ENCODE measurements at regions of chr17 and their contacts with region 1.

Region 1: GRCh38 chr17:38454516-38454915 is 26.3 kb downstream of the ARHGAP23 start:
- DNase-seq: no peak
- H3K4me3 ChIP-seq: peak overlapping the region; percentile 39 to 57 (median 42); a peak in 6 of 8 replicates
- H3K27ac ChIP-seq: no peak overlapping the region; the same call in 1 of the 2 replicates
- H3K4me1 ChIP-seq: peaks cover 29 to 61% (median 51%) of the 10 kb centered on the region in 4 experiments
- H3K27me3 ChIP-seq: no peaks in the 10 kb centered on the region
- CTCF ChIP-seq: no peak
- EP300 ChIP-seq: no peak
- POLR2A ChIP-seq: no peak; a peak in 1 of 3 replicates
- RAD21 ChIP-seq: no peak

Region 2: GRCh38 chr17:38317081-38317801 is 137.3 kb before region 1 on chr17:
- CTCF ChIA-PET with region 1: no interaction called
- POLR2A ChIA-PET with region 1: no interaction called
- DNase-seq: no peak
- H3K4me3 ChIP-seq: no peak overlapping the region
- H3K27ac ChIP-seq: no peak overlapping the region
- H3K4me1 ChIP-seq: no peaks in the 10 kb centered on the region
- H3K27me3 ChIP-seq: no peaks in the 10 kb centered on the region
- CTCF ChIP-seq: no peak
- EP300 ChIP-seq: no peak
- POLR2A ChIP-seq: no peak
- RAD21 ChIP-seq: no peak

Region 3: DNA sequence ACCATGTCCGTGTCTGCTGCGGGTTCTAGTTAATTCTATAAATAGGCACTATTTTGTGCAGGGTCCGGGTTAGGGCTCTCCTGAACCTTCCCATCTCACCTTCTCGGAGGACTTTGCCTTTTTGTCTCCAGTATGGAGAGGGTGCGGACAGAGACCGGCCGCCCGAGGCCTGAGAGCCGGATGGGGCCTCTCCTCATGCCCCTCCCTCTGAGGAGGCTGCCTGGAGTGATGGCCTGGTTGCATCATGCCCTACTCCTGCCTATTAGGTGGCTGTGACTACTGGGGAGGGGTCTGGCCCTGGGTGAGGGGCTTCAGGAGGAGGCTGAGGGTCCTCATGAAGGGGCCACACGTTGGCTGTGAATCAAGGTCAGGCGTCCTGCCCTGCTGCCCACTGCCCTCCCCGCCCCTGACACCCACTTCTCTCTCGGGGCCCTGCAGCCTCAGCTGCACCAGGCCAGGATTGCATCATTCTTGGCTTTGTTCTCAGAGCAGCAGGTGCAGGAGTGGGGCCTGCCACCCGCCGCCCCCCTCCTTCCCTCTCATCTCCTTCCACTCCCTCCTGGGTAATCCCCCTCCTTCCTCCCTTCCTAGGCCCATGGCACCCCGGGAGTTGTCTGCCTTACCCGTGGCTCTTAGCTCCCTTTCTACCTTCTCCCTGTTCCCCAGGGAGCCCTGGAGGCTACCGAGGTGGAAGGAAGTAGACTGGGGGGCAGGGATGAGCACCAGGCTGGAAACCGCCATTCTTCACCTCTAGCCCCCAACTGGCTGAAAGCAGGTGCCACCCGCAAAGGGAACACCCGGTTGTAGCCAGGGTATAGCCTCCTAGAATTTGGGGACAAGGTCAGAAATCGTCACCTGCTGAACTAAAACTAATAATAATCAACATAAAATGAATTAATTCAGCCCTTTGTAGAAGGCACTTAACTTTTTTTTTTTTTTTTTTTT is 39.0 kb before region 1 on chr17:
- CTCF ChIA-PET with region 1: interaction called, 167 read pairs
- POLR2A ChIA-PET with region 1: interaction called, 61 read pairs
- DNase-seq: peak in 1 of 2 experiments; percentile 86
- H3K4me3 ChIP-seq: peak overlapping the region in 3 of 4 experiments; percentile 20 to 55 (median 39); a peak in 6 of 8 replicates
- H3K27ac ChIP-seq: peak overlapping the region; percentile 94
- H3K4me1 ChIP-seq: peaks cover 4 to 44% (median 37%) of the 10 kb centered on the region in 4 experiments
- H3K27me3 ChIP-seq: peaks cover 0 to 19% (median 7%) of the 10 kb centered on the region in 4 experiments; a peak in 4 of 7 replicates
- CTCF ChIP-seq: no peak; a peak in 1 of 4 replicates
- EP300 ChIP-seq: peak in 1 of 2 experiments; percentile 57; a peak in 1 of 3 replicates
- POLR2A ChIP-seq: peak in 1 of 2 experiments; percentile 74; a peak in 2 of 3 replicates
- RAD21 ChIP-seq: no peak

Region 4: DNA sequence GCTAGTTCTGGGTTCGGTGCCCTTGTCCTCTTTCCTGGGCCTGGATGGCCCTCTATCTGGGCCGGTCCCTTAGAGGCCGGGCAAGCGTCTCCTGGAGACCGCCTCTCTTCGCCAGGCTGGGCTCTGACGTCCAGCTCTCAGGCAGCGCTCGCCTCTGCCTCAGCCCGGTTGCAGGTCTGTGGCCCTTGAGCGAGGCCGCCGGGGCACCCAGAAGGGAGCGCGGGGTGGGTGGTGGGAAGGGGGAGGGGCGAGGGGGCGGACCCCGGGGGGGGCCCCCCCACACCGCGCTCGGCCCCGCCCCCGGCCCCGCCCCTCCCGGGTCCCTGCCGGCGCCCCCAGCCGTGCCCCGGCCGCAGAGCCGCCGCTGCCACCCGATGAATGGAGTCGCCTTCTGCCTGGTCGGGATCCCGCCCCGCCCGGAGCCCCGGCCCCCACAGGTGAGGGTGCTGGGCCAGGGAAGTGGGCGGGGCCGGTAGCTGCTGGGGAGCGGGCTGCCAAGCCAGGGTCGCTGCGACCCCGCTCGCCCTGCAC is 26.3 kb before region 1 on chr17 and contains the start of gene ARHGAP23:
- CTCF ChIA-PET with region 1: interaction called, 167 read pairs
- POLR2A ChIA-PET with region 1: interaction called, 72 read pairs
- DNase-seq: peak in 1 of 2 experiments; percentile 67
- H3K4me3 ChIP-seq: peak within 1 kb of the TSS; percentile 66 to 91 (median 72)
- H3K27ac ChIP-seq: no peak within 1 kb of the TSS; the same call in 1 of the 2 replicates
- H3K4me1 ChIP-seq: peaks cover 22 to 35% (median 25%) of the 10 kb centered on the region in 4 experiments
- H3K27me3 ChIP-seq: no peaks in the 10 kb centered on the region
- CTCF ChIP-seq: no peak
- EP300 ChIP-seq: no peak
- POLR2A ChIP-seq: no peak
- RAD21 ChIP-seq: peak in 1 of 2 experiments; percentile 1; a peak in 1 of 4 replicates
- total RNA-seq, gene ARHGAP23: 107 and 108 TPM in 2 replicates

Region 5: DNA sequence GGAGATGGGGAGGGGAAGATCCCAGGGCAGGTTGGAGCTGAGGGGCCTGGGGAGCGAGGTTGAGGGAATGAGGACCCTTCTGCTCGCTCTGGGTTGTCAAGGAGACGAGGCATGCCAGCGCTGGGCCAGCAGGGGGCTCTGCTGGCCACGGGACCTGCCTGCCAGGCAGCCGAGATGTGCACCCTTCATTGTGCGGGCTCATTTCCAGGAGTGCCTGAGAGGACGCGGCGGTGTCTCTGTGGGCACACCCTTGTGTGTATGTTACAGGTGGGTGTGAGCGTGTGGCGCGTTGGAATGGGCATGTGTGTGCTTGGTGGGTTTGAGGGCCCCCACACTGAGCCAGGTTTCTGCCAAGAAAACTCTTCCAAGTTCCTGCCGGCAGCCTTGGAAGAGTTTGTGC is 10.4 kb before region 1 on chr17:
- CTCF ChIA-PET with region 1: interaction called, 51 read pairs
- POLR2A ChIA-PET with region 1: interaction called, 107 read pairs
- DNase-seq: peak in 1 of 2 experiments; percentile 80
- H3K4me3 ChIP-seq: no peak overlapping the region
- H3K27ac ChIP-seq: no peak overlapping the region
- H3K4me1 ChIP-seq: peaks cover 3 to 50% (median 31%) of the 10 kb centered on the region in 4 experiments
- H3K27me3 ChIP-seq: no peaks in the 10 kb centered on the region
- CTCF ChIP-seq: peak; percentile 90 to 95 (median 94)
- EP300 ChIP-seq: no peak
- POLR2A ChIP-seq: no peak
- RAD21 ChIP-seq: peak; percentile 88 to 90

Region 6: GRCh38 chr17:38476544-38476943 is 22.0 kb after region 1 on chr17:
- CTCF ChIA-PET with region 1: interaction called, 11 read pairs
- POLR2A ChIA-PET with region 1: interaction called, 8 read pairs
- DNase-seq: no peak
- H3K4me3 ChIP-seq: no peak overlapping the region
- H3K27ac ChIP-seq: no peak overlapping the region; the same call in 1 of the 2 replicates
- H3K4me1 ChIP-seq: no peaks in the 10 kb centered on the region
- H3K27me3 ChIP-seq: no peaks in the 10 kb centered on the region
- CTCF ChIP-seq: no peak
- EP300 ChIP-seq: no peak
- POLR2A ChIP-seq: no peak
- RAD21 ChIP-seq: no peak

Region 7: DNA sequence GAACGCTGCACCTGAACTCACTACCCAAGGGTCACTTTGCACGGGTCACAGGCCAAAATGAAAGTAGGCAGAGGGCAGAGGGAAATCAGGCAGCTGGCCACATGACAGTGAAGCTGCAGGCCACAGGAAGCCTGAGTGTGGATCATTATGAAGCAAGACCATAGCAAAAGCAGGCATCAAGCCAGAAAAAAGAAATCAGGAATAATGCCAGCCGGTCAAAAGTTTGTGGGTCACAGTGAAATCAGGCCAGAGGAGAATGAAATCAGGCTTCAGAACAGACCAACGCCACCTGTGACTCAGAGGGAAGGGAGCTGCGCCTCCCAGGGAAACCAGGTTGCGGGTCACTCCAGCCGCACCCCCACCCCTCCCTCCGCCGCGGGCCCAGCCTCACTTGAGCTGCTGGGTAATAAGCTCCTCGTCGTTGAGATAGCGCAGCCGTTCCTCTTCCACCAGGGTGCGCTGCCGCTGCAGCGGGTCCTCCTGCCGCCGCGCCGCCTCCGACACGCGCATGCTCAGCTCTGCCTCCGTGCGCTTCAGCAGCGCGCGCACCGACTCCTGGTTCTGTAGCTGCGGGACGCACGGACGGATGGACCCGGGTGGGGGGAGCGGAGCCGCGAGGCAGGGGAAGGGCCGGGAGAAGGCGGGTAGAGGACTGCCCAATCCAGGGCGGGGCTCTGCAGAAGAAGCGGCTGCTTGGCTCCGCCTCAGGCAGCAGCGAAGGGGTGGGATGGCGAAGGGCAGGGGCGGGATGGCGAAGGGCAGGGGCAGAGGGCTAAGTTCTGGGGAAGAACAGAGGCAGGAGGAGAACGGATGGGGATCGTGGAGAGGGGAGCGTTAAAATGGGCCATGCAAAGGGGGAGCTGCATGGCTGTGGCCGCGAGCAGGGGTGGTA is 103.6 kb after region 1 on chr17:
- CTCF ChIA-PET with region 1: interaction called, 15 read pairs
- POLR2A ChIA-PET with region 1: interaction called, 5 read pairs
- DNase-seq: peak; percentile 93 to 97
- H3K4me3 ChIP-seq: peak overlapping the region; percentile 37 to 69 (median 58); a peak in 7 of 8 replicates
- H3K27ac ChIP-seq: no peak overlapping the region
- H3K4me1 ChIP-seq: peaks cover 4 to 37% (median 27%) of the 10 kb centered on the region in 4 experiments
- H3K27me3 ChIP-seq: peaks cover 34 to 52% (median 48%) of the 10 kb centered on the region in 4 experiments
- CTCF ChIP-seq: peak; percentile 95 to 97 (median 96)
- EP300 ChIP-seq: 0 out of 3 replicates have a peak, but pooled peaks of 1 of the 2 experiments have one; percentile 58
- POLR2A ChIP-seq: no peak
- RAD21 ChIP-seq: peak; percentile 75 to 85